Motor neuron (in vitro differentiated cells): ENCODE measurements at regions of chr17 and their contacts with region 1.

Region 1: GRCh38 chr17:45852535-45853297 is 8.0 kb downstream of the SPPL2C start:
- ATAC-seq: peak in 3 of 8 experiments; percentile 32 to 59 (median 41)
- H3K4me3 ChIP-seq: no peak overlapping the region
- H3K27ac ChIP-seq: no peak overlapping the region
- H3K4me1 ChIP-seq: no peaks in the 10 kb centered on the region

Region 2: DNA sequence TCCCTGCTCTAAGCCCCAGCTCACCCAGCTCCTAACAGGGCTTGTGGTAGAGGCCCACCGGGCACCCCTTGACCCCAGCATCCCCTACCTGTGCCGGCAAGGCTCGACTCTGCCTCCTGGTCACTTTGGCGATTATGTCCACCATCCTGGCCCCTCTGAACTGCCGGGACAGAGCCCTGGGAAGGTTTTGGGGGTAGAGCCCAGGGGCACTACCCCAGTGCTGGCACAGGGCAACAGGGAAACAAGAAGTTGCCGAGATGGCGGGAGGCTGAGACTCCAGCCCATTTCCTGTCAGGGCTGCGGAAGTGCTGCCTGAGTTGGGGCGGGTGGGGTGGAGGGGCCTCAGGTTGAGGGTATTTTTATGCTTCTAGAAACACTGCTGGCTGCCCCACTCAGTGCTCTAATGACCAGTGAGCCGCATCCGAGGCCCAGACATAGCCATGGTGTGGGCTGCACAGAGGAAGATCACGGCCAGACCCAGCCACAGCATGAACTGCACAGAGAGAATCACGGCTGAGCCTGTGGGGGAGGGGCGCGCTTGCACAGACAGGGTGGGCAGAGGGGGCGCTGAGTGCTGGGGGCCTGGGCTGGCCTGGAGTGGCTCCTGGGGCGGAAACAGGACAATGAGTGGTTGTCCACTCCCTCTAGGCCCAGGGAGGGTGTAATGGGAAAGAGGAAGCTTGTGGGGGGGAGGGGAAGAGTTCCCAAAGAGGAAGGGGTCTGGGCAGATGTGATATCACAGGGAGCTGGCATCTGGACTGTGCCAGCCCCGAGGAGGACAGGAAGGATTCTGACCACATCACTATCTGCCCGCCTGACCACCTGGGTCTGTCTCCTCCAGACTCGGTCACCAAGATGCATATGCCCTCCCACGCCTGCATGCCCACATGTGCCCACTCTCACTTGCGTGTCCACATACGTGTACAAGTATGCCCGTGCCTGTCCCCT is 442.3 kb before region 1 on chr17:
- in situ Hi-C with region 1: loop called in 1 of 9 experiments (anchors 25 kb)
- ATAC-seq: peak in 1 of 8 experiments; percentile 24
- H3K4me3 ChIP-seq: no peak overlapping the region
- H3K27ac ChIP-seq: no peak overlapping the region
- H3K4me1 ChIP-seq: peaks cover 4 to 11% of the 10 kb centered on the region in 2 donors

Region 3: DNA sequence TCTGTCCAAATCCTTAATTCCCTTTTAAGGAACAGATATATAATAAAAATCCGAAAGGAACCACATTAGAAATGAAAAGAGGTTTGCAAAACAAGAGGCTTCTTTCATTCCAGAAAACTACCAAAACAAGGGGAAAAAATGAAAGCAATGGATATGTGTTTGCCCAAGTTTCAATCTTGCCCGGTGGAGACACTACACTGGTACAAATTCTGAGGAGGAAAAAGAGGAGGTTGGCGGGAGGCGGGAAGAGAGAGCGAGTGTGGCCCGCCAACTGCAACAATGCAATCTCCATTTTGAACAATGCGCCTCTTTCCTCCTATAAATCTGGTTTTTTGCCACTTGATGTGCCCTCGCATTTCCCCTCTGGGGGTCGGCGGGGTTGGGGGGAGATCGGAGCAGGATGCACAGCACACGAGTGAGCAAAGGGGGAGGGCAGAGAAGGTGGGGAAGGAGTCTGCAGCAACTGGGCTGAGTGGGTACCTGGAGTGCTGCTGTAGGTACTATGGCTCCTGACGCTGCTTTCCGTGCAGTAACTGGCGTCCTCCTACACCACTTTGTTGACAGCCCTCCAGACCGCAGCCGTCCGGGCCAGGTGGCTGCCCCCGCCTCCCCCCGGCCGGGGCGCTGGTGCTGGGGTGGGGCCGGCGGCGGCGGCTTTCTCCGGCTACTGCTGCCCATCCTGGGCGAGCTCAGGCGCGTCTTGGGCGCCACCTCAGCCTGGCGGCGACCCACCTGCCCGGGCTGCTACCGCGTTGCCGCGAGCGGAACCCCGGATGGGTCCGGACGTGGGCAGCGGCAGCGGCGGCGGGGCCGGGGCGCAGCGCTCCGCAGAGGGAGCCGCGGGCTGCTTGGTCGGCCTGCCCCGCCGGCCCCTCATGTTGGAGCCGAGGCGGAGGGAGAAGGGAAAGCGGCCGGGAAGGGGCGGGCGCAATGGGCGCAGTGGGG is 268.4 kb before region 1 on chr17:
- in situ Hi-C with region 1: no loop called
- ATAC-seq: peak; percentile 44 to 80 (median 73)
- H3K4me3 ChIP-seq: peak overlapping the region; percentile 63 to 98 (median 84)
- H3K27ac ChIP-seq: peak overlapping the region; percentile 84 to 86
- H3K4me1 ChIP-seq: peaks cover 12% of the 10 kb centered on the region in 2 donors

Region 4: GRCh38 chr17:45688353-45688752 is 164.4 kb before region 1 on chr17:
- in situ Hi-C with region 1: no loop called
- ATAC-seq: peak in 7 of 8 experiments; percentile 45 to 85 (median 62)
- H3K4me3 ChIP-seq: no peak overlapping the region
- H3K27ac ChIP-seq: no peak overlapping the region
- H3K4me1 ChIP-seq: peaks cover 16 to 22% of the 10 kb centered on the region in 2 donors

Region 5: DNA sequence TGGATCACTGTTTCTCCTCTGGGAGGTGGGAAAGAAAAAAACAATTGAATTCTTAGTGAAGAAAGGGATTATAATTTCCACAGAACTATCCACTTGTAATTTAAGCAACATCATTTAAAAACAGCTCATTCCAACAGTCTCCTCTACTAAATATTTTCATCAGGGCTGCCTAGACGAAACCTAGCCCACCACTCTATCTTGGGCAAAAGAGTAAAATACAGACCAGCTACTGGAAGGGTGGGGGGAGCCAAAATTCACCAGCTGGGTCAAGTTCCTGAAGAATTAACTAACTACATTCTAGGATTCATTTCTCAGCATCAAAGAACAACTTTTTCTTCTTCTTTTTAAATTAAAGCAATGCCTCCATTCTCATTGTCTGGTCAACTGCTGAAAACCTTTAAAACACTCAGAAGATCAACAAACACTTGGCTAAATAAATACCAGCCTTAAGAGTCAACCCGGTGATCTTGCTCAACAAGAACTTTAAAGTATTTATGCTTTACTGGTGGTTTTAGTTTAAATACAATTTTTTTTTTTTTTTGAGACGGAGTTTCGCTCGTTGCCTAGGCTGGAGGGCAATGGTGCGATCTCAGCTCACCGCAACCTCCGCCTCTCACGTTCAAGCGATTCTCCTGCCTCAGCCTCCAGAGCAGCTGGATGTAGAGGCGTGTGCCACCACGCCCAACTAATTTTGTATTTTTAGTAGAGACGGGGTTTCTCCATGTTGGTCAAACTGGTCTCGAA is 315.3 kb after region 1 on chr17:
- in situ Hi-C with region 1: no loop called
- ATAC-seq: peak in 2 of 8 experiments; percentile 24 to 70
- H3K4me3 ChIP-seq: no peak overlapping the region
- H3K27ac ChIP-seq: no peak overlapping the region
- H3K4me1 ChIP-seq: peaks cover 0 to 20% of the 10 kb centered on the region in 2 donors

Region 6: GRCh38 chr17:46922804-46923635 is 1070.3 kb after region 1 on chr17 and contains the start of gene GOSR2:
- in situ Hi-C with region 1: no loop called
- ATAC-seq: peak; percentile 96 to 99 (median 97)
- H3K4me3 ChIP-seq: peak within 1 kb of the TSS; percentile 84 to 91 (median 85)
- H3K27ac ChIP-seq: peak within 1 kb of the TSS; percentile 100
- H3K4me1 ChIP-seq: peaks cover 8 to 9% of the 10 kb centered on the region in 2 donors
- total RNA-seq, gene GOSR2: 32.2 to 77.0 (median 45.1) TPM